ENCODE measurements at regions of chr11 and their contacts with region 1.

Region 1: DNA sequence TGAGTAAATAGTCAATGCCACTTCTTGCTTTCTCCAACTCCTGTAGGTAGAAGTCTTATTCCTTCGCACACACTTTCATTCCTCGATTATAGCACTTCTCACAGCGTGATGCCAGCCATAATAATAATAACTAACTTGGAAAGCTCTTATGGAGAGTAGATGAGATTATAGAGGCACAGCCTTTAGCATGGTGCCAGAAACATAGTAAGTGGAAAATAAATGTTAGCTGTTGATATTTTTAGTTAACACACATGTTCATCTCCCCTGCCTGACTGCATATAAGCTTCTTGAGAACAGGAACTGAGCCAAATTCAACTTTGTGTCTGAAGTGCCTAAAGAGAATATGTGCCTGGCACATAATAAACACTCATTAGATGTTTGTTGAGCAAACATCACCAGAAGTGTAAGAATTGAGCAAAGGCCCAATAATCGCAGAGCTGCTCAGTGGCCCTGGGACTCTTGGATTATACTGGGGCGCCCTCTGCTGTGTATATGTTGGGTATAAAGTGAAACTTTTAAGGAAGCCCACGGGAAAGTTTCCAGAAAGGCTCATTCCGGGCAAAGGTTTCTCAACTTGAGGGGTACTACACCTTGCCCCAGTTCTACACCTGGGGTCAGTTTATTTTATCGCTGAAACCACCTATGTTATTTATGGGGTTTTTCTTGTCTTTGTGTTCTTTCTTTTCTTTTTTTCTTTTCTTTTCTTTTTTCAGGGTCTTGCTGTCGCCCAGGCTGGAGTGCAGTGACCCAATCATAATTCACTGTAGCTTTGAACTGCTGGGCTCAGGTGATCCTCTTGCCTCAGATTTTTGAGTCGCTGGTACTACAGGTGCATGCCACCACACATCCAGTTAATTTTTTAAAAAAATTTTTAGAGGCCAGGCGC is 22.3 kb downstream of the SLN start:
- DNase-seq: peak; percentile 27 to 94 (median 70)

Region 2: GRCh38 chr11:107549253-107549953 is 140.2 kb before region 1 on chr11:
- intact Hi-C with region 1: loop called (anchors 1 kb)
- DNase-seq: peak in 1 of 10 donors; percentile 24

Region 3: DNA sequence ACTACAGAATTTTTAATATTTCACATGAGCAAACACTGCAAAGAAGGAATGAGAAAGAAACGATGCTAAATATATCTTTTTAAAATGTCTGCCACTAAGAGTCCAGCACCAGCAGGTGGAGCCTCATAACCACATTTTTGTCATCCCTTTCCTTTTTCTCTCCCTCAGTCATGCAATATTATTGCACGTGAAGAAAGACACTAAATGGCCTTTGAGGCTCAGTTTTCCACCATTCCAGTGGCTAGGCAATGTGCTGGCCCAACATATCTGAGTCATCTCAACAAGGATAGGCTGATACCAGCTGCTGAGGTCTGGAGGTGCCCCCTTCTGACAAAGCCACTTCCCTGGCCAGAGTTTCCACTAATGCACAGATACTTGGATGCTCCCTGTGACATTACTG is 125.9 kb before region 1 on chr11:
- intact Hi-C with region 1: loop called (anchors 5 kb)
- DNase-seq: peak in 1 of 10 donors; percentile 25

Region 4: GRCh38 chr11:107573438-107573837 is 116.1 kb before region 1 on chr11:
- intact Hi-C with region 1: loop called (anchors 1 kb)
- DNase-seq: no peak

Region 5: GRCh38 chr11:108160970-108161566 is 471.5 kb after region 1 on chr11:
- intact Hi-C with region 1: no loop called
- DNase-seq: no peak